Posterior vena cava (tissue), 2 donors: ENCODE measurements at regions of chr11 and their contacts with region 1.

Region 1: GRCh38 chr11:118145285-118146227 is 7.1 kb downstream of the SCN4B start:
- DNase-seq: peak; percentile 94

Region 2: GRCh38 chr11:118171269-118172062 is 25.9 kb after region 1 on chr11:
- intact Hi-C with region 1: loop called in 1 of 2 experiments (anchors 2 kb)
- DNase-seq: peak; percentile 89

Region 3: DNA sequence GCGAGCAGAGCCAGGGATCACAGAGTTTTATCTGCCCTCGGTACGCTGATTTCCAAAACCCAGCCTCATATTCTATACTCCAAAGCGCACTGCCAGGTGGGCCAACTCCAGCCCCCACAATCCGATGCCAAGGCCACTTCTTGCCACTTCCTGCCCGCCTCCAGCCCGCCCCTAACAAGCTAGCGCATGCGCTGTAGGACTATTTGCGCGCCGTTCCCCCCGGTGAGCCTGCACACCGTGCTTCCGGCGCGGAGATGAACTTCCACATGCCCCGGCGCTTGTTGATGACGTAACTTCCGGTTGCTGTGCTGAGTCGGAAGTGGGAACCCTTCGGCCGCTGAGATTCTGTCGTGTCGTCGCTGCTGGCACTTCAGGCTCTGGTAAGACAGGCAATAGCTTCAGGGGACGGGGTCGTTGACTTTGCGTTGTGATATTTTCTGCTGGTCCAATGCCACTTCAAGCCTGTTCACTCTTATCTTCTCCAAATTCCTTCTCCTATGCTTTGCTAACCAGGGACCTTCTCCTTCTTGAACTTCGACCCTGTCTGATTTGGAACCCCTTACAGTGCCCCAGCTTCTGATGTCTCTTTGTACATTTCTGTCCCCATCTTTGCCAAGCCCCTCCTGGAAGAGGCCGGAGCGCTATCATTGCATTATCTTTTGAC is 213.9 kb after region 1 on chr11 and contains the start of gene UBE4A:
- intact Hi-C with region 1: loop called (anchors 10 kb)
- DNase-seq: peak; percentile 99
- total RNA-seq, gene UBE4A: 31.1 to 34.1 TPM